ENCODE measurements at regions of chr19 and their contacts with region 1.

Region 1: GRCh38 chr19:23273590-23274413 is 23.6 kb upstream of the ZNF724 start:
- DNase-seq: peak; percentile 88
- ATAC-seq: peak; percentile 98
- H3K4me3 ChIP-seq: peak overlapping the region; percentile 90 to 97 (median 94)
- H3K27ac ChIP-seq: peak overlapping the region; percentile 87
- H3K4me1 ChIP-seq: peaks cover 63% of the 10 kb centered on the region
- H3K27me3 ChIP-seq: no peaks in the 10 kb centered on the region; a peak in 1 of 5 replicates
- CTCF ChIP-seq: peak; percentile 50
- EP300 ChIP-seq: no peak
- POLR2A ChIP-seq: peak; percentile 91 to 92
- RAD21 ChIP-seq: no peak

Region 2: GRCh38 chr19:23249911-23250649 is 23.7 kb before region 1 on chr19 and contains the start of gene ZNF724:
- CTCF ChIA-PET with region 1: no interaction called
- POLR2A ChIA-PET with region 1: interaction called, 29 read pairs
- in situ Hi-C with region 1: no loop called
- intact Hi-C with region 1: loop called (anchors 1 kb)
- DNase-seq: peak; percentile 97
- ATAC-seq: peak; percentile 99
- H3K4me3 ChIP-seq: peak within 1 kb of the TSS; percentile 77 to 88 (median 81)
- H3K27ac ChIP-seq: peak within 1 kb of the TSS; percentile 90
- H3K4me1 ChIP-seq: peaks cover 31% of the 10 kb centered on the region
- H3K27me3 ChIP-seq: no peaks in the 10 kb centered on the region
- CTCF ChIP-seq: no peak
- EP300 ChIP-seq: no peak
- POLR2A ChIP-seq: peak; percentile 68 to 84
- RAD21 ChIP-seq: no peak
- total RNA-seq, gene ZNF724: 15.0 and 19.8 TPM in 2 replicates

Region 3: DNA sequence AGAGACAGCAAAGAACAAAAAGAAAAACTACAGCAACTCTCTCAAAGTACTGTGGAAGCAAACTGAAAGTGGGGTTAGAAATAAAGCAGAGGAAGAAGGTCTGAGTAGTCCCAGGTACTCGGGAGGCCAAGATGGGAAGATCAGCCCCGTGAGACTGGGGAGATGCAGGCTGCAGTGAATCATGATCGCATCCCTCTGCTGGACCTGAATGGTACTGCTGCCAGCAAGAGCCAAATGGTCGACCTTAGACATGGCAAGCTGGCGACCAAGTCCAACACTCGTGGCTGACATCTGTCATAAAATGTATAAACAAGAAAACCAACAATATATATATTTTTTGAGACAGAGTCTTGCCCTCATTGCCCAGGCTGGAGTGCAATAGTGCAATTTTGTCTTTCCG is 10.1 kb after region 1 on chr19:
- CTCF ChIA-PET with region 1: no interaction called
- POLR2A ChIA-PET with region 1: interaction called, 20 read pairs
- in situ Hi-C with region 1: no loop called
- intact Hi-C with region 1: no loop called
- DNase-seq: peak; percentile 54
- ATAC-seq: peak; percentile 82
- H3K4me3 ChIP-seq: 0 out of 6 replicates have a peak overlapping the region, but pooled peaks of 1 of the 3 experiments have one; percentile 10
- H3K27ac ChIP-seq: no peak overlapping the region
- H3K4me1 ChIP-seq: peaks cover 42% of the 10 kb centered on the region
- H3K27me3 ChIP-seq: no peaks in the 10 kb centered on the region
- CTCF ChIP-seq: peak; percentile 73
- EP300 ChIP-seq: no peak
- POLR2A ChIP-seq: no peak
- RAD21 ChIP-seq: peak; percentile 45; the same call in 1 of the 2 replicates

Region 4: GRCh38 chr19:23395041-23395721 is 121.4 kb after region 1 on chr19 and contains the start of gene ZNF91:
- CTCF ChIA-PET with region 1: no interaction called
- POLR2A ChIA-PET with region 1: interaction called, 11 read pairs
- in situ Hi-C with region 1: no loop called
- intact Hi-C with region 1: loop called (anchors 10 kb)
- DNase-seq: peak; percentile 98
- ATAC-seq: peak; percentile 97
- H3K4me3 ChIP-seq: peak within 1 kb of the TSS; percentile 91 to 97 (median 95)
- H3K27ac ChIP-seq: peak within 1 kb of the TSS; percentile 96
- H3K4me1 ChIP-seq: peaks cover 35% of the 10 kb centered on the region
- H3K27me3 ChIP-seq: no peaks in the 10 kb centered on the region
- CTCF ChIP-seq: 0 out of 2 replicates have a peak, but pooled peaks have one; percentile 17
- EP300 ChIP-seq: no peak
- POLR2A ChIP-seq: peak; percentile 96 to 97
- RAD21 ChIP-seq: no peak
- total RNA-seq, gene ZNF91: 21.5 and 30.7 TPM in 2 replicates

Region 5: DNA sequence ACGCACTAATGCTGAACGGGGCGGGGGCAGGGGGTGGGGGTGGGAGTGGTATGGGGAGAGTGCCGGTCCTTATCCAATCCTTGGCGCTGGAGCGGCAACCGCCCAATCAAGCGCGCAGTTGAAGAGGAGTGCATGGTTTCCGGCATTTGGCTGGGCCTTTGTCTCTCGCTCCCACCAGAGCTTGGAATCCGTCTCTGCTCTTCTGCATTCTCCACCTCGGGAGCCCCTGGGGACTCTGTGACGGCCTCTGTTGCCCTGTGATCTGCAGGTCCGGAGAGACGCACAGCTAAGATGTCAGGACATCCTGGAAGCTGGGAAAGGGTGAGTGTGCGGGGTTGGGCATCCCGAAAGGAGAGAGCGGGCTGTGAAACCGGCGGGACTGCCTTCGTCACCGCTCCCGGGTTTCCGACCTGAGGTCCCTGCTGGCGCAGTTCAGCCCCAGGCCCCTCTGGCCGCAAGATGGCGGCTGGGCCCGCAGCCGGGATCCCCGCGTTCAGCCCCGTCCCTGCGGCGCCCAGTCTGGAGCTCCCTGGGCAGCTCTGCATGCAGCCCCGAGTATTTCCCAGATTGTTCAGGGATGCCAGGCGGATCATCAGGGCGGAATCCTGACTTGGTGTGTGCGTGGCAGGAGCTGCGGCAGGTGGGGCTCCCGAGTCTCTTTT is 759.6 kb after region 1 on chr19:
- CTCF ChIA-PET with region 1: no interaction called
- POLR2A ChIA-PET with region 1: no interaction called
- in situ Hi-C with region 1: loop called (anchors 25 kb)
- intact Hi-C with region 1: no loop called
- DNase-seq: peak; percentile 90
- ATAC-seq: peak; percentile 97
- H3K4me3 ChIP-seq: peak overlapping the region; percentile 84 to 91 (median 85)
- H3K27ac ChIP-seq: peak overlapping the region; percentile 98
- H3K4me1 ChIP-seq: peaks cover 47% of the 10 kb centered on the region
- H3K27me3 ChIP-seq: no peaks in the 10 kb centered on the region; a peak in 1 of 5 replicates
- CTCF ChIP-seq: peak; percentile 56
- EP300 ChIP-seq: no peak
- POLR2A ChIP-seq: peak; percentile 83 to 86
- RAD21 ChIP-seq: peak; percentile 37

Measured in HepG2 (cell line).